B cell (primary cell): ENCODE measurements at regions of chr22 and their contacts with region 1.

Region 1: GRCh38 chr22:43088979-43089717 is at the start of gene TTLL1:
- DNase-seq: peak; percentile 87
- ATAC-seq: peak; percentile 98
- H3K4me3 ChIP-seq: peak within 1 kb of the TSS; percentile 58 to 78 (median 68)
- H3K4me3 Mint-ChIP-seq: peak within 1 kb of the TSS; percentile 93
- H3K27ac ChIP-seq: peak within 1 kb of the TSS in 1 of 2 donors; percentile 2
- H3K27ac Mint-ChIP-seq: peak within 1 kb of the TSS; percentile 64
- H3K4me1 ChIP-seq: peaks cover 4 to 20% of the 10 kb centered on the region in 2 donors
- H3K4me1 Mint-ChIP-seq: peaks cover 18% of the 10 kb centered on the region
- H3K27me3 ChIP-seq: no peaks in the 10 kb centered on the region
- H3K27me3 Mint-ChIP-seq: no peaks in the 10 kb centered on the region
- CTCF ChIP-seq: no peak
- total RNA-seq, gene TTLL1: 2.1 and 3.0 TPM in 2 replicates

Region 2: GRCh38 chr22:43014869-43015676 is 74.1 kb before region 1 on chr22 and contains the start of gene PACSIN2:
- CTCF ChIA-PET with region 1: no interaction called
- POLR2A ChIA-PET with region 1: no interaction called
- intact Hi-C with region 1: loop called (anchors 2 kb)
- DNase-seq: peak; percentile 98
- ATAC-seq: peak; percentile 98
- H3K4me3 ChIP-seq: peak within 1 kb of the TSS; percentile 73 to 96 (median 77)
- H3K4me3 Mint-ChIP-seq: peak within 1 kb of the TSS; percentile 98
- H3K27ac ChIP-seq: peak within 1 kb of the TSS; percentile 66 to 80
- H3K27ac Mint-ChIP-seq: peak within 1 kb of the TSS; percentile 98
- H3K4me1 ChIP-seq: peaks cover 13 to 19% of the 10 kb centered on the region in 2 donors
- H3K4me1 Mint-ChIP-seq: peaks cover 32% of the 10 kb centered on the region
- H3K27me3 ChIP-seq: no peaks in the 10 kb centered on the region
- H3K27me3 Mint-ChIP-seq: no peaks in the 10 kb centered on the region
- CTCF ChIP-seq: no peak
- total RNA-seq, gene PACSIN2: 59.3 and 60.3 TPM in 2 replicates

Region 3: GRCh38 chr22:43110444-43110926 is 21.3 kb after region 1 on chr22 and contains the start of gene BIK:
- CTCF ChIA-PET with region 1: no interaction called
- POLR2A ChIA-PET with region 1: no interaction called
- intact Hi-C with region 1: loop called (anchors 2 kb)
- DNase-seq: peak; percentile 65
- ATAC-seq: peak; percentile 61
- H3K4me3 ChIP-seq: peak within 1 kb of the TSS; percentile 45 to 73 (median 57)
- H3K4me3 Mint-ChIP-seq: peak within 1 kb of the TSS; percentile 87
- H3K27ac ChIP-seq: no peak within 1 kb of the TSS
- H3K27ac Mint-ChIP-seq: peak within 1 kb of the TSS; percentile 41
- H3K4me1 ChIP-seq: peaks cover 32 to 41% of the 10 kb centered on the region in 2 donors
- H3K4me1 Mint-ChIP-seq: peaks cover 25% of the 10 kb centered on the region
- H3K27me3 ChIP-seq: peaks cover 0 to 71% (median 34%) of the 10 kb centered on the region in 4 experiments
- H3K27me3 Mint-ChIP-seq: peaks cover 36% of the 10 kb centered on the region
- CTCF ChIP-seq: peak; percentile 26
- total RNA-seq, gene BIK: 1.3 TPM in 2 replicates